Activated T-helper 1 cell treated with anti-CD3 and anti-CD28 coated beads, Interleukin-12 subunit alpha, Interleukin-12 subunit beta, Interleukin-2, Interleukin-4 antibody, amounts not matched to agents 30 ng/mL and 10 ng/mL and 1 ng/mL, durations not matched to agents 14 hours and 24 hours and 36 hours (primary cell): ENCODE measurements at regions of chr11 and their contacts with region 1.

Region 1: GRCh38 chr11:108237058-108237481 is 14.2 kb downstream of the ATM start:
- DNase-seq: no peak
- H3K4me3 Mint-ChIP-seq: peak overlapping the region; percentile 68
- H3K27ac Mint-ChIP-seq: peak overlapping the region; percentile 78
- H3K4me1 Mint-ChIP-seq: peaks cover 60% of the 10 kb centered on the region
- H3K27me3 Mint-ChIP-seq: peaks cover 4% of the 10 kb centered on the region

Region 2: DNA sequence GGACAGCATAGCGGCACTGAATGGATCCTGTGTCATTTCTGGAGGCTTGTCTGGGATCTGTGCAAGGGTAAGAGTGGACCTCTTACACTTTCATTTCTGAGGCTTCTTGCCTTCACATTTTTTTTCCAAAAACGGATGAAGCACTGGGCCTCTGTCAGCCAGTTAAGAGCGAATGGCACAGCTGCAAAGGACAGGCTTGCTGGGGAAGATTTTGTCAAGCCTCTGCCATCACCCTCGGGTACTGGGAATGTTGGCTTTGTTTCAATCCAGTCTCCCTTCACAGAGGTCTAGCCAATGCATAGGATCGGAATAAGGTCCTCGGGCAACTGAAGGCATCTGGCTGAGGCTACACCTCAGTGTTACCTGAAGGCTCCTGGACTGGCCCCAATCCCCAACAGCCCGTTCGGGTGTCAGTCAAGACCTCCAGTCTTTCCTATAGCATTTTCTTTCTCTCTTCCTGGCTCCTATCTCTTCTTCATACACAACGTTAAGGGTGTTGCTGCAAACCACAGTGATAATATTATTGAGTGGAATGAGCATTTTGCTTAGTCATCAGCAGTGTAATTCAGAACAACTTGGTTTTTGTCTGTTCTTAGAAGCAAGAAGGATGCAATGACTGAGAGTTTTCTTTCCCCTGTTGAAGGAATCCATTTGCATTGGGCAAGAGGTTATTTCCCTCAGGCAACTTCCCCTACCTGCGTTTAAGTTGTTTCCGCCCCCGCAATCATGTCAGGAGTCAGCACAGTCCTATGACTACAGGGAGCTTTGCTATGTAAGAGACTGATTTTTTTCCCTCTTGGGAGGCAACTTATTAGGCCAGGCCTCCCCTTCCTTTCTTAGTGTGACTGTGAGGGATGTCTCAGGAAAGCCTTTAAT is 37.4 kb before region 1 on chr11:
- intact Hi-C with region 1: loop called (anchors 1 kb)
- DNase-seq: peak; percentile 48
- H3K4me3 Mint-ChIP-seq: peak overlapping the region; percentile 34
- H3K27ac Mint-ChIP-seq: peak overlapping the region; percentile 93
- H3K4me1 Mint-ChIP-seq: peaks cover 55% of the 10 kb centered on the region
- H3K27me3 Mint-ChIP-seq: no peaks in the 10 kb centered on the region

Region 3: DNA sequence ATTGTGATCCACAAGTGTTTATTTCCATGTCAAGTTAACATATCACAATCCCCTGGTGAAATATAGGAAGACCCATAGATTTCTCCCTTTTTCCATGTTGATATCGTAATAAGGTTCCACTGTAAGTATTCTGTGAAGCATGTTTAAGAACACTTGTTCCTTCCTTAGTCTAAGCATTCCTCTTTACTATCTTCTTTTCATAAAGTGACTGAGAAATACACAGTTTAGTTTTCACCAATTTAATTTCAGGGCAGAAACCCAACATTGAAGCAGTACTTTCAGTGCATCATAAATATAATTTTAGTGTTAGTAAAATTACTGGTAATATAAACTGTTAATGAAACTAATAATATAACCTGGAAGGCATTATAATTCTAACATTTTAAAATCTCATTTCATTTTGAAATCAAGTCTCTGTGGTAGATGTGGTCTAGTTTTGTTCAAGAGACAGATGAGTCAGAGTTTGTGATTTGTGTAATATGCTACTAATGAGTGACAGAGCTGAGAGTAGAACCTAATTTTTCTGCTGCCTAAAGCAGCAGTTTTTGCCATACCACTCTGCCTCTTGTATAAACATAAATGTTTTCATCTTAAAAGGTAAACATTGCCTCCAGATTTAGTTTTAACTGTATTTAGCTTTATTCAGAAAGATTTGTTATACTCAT is 65.2 kb after region 1 on chr11:
- intact Hi-C with region 1: loop called (anchors 5 kb)
- DNase-seq: no peak
- H3K4me3 Mint-ChIP-seq: no peak overlapping the region
- H3K27ac Mint-ChIP-seq: no peak overlapping the region
- H3K4me1 Mint-ChIP-seq: no peaks in the 10 kb centered on the region
- H3K27me3 Mint-ChIP-seq: no peaks in the 10 kb centered on the region

Region 4: DNA sequence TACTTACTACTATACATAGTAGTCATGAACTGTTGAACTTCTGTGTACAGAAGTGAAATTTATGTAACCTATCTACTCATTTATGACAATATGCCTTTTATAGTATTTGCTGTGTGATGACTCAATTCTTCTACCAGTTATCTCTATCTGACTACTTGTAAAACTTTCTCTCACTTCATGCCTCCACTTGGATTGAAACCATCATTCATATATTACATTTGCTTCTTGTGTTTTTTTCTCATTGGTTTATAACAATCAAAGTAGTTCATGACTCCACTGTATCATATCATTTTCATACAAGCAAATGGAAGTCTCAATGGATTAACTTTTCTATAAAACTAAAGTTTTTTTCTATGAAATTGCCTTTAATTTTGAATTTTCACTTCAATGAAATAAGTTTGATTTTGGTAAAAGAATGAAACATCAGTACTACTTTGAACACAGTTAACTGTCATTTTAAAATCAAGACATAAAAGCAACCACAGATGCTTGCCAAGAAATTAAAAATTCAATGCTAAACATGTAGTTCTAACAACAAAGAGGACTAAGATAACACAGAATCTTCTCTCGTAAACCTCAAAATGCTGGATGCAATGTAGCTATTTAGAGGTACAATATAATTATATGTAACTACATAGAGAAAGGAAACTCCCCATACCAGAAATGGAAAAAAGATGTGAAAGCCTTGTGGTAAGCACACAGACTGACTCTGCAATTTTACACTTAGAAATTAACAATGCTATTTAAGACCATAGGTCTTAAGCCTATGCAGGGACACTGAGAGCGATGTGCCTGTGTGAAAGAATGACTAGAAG is 384.1 kb after region 1 on chr11:
- intact Hi-C with region 1: loop called (anchors 1 kb)
- DNase-seq: no peak
- H3K4me3 Mint-ChIP-seq: no peak overlapping the region
- H3K27ac Mint-ChIP-seq: no peak overlapping the region
- H3K4me1 Mint-ChIP-seq: peaks cover 18% of the 10 kb centered on the region
- H3K27me3 Mint-ChIP-seq: peaks cover 7% of the 10 kb centered on the region

Region 5: DNA sequence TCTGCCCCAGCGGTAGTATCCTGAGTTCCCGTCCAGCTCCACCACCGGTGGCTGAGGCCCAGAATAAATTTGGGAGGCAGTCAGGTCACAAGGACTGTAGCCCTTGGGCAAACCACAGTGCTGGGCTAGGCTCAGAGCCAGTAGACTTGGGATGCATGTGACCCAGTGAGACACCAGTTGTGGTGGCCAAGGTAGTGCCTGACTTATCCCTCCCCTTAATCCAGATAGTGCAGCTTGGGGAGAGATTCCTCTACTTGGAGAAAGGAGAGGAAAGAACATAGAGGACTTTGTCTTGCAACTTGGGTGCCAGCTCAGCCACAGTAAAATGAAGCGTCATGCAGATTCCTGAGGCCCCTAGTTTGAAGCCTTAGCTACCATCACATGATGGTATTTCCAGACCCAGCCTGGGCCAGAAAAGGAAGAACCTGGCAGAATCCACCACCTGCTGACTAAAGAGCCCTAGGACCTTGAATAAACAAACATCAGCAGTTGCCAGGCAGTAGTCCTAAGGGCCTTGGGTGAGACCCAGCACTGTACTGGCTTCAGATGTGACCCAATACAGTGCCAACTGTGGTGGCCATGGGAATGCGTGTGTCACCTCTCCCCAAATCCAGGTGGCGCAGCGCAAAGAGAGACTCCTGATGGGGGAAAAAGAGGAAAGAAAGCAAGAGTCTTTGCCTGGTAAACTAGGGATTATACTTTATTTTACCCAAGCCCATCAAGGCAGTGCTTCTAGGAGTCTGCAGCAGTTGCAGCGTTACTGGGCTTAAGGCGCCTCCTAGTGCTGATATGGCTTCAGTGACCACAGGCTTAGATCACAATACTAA is 410.8 kb after region 1 on chr11:
- intact Hi-C with region 1: no loop called
- DNase-seq: peak; percentile 47
- H3K4me3 Mint-ChIP-seq: no peak overlapping the region
- H3K27ac Mint-ChIP-seq: no peak overlapping the region
- H3K4me1 Mint-ChIP-seq: no peaks in the 10 kb centered on the region
- H3K27me3 Mint-ChIP-seq: peaks cover 4% of the 10 kb centered on the region